GM10248 (cell line): ENCODE measurements at regions of chr11 and their contacts with region 1.

Region 1: GRCh38 chr11:59224351-59224928 is 11.7 kb upstream of the MPEG1 start:
- DNase-seq: no peak
- CTCF ChIP-seq: no peak

Region 2: GRCh38 chr11:59186130-59186594 is 38.3 kb before region 1 on chr11:
- CTCF ChIA-PET with region 1: interaction called, 22 read pairs
- POLR2A ChIA-PET with region 1: no interaction called
- DNase-seq: peak; percentile 79
- CTCF ChIP-seq: peak; percentile 59